Activated naive CD4-positive, alpha-beta T cell treated with anti-CD3 and anti-CD28 coated beads for 36 hours (primary cell): ENCODE measurements at regions of chr1 and their contacts with region 1.

Region 1: GRCh38 chr1:21384620-21385019 is 55.3 kb upstream of the NBPF3 start:
- DNase-seq: no peak
- H3K4me3 Mint-ChIP-seq: no peak overlapping the region
- H3K27ac Mint-ChIP-seq: no peak overlapping the region
- H3K4me1 Mint-ChIP-seq: no peaks in the 10 kb centered on the region
- H3K27me3 Mint-ChIP-seq: peaks cover 4% of the 10 kb centered on the region

Region 2: DNA sequence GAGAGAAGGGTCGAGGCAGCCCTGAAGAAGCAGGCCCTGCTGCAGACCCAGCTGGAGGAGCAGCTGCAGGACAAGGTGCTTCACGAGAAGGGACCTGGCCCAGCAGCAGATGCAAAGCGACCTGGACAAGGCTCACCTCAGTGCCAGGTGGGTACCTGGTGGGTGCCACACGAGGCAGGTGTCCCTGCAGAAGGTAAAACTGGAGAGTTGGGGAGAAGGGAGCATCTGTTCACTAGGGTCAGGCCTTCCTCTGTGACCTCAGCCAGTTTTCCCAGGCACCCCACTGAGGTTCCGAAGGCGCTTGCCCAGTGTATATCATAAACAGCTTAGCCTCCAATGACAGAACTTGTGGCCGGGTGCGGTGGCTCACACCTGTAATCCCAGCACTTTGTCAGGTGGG is 49.8 kb after region 1 on chr1:
- CTCF ChIA-PET with region 1: no interaction called
- intact Hi-C with region 1: loop called (anchors 1 kb)
- DNase-seq: no peak
- H3K4me3 Mint-ChIP-seq: no peak overlapping the region
- H3K27ac Mint-ChIP-seq: no peak overlapping the region
- H3K4me1 Mint-ChIP-seq: peaks cover 5% of the 10 kb centered on the region
- H3K27me3 Mint-ChIP-seq: peaks cover 3% of the 10 kb centered on the region